ENCODE measurements at regions of chr13 and their contacts with region 1.

Region 1: GRCh38 chr13:76473552-76474134 is 412.6 kb downstream of the KCTD12 start:
- DNase-seq: peak; percentile 50
- H3K4me3 Mint-ChIP-seq: no peak overlapping the region
- H3K27ac Mint-ChIP-seq: no peak overlapping the region
- H3K4me1 Mint-ChIP-seq: no peaks in the 10 kb centered on the region
- H3K27me3 Mint-ChIP-seq: peaks cover 6% of the 10 kb centered on the region

Region 2: DNA sequence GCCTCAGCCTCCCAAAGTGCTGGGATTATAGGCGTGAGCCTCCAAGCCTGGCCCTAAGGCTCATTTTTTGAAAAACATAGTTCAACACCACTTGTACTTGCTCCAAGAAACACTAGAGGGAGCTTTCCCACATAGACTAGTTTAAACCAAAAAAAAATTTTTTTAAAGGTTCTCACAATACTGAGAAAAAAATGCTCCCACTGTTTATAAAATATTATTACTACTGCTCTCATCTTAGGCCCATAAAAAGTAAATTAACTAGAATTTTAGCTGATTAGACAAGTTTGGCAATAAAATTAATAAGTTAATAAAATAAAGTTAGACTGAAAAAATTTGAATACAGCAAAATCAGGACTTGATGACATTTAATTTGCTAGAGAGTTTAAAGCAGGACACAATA is 1101.1 kb before region 1 on chr13:
- intact Hi-C with region 1: loop called (anchors 10 kb)
- DNase-seq: no peak
- H3K4me3 Mint-ChIP-seq: no peak overlapping the region
- H3K27ac Mint-ChIP-seq: no peak overlapping the region
- H3K4me1 Mint-ChIP-seq: peaks cover 12% of the 10 kb centered on the region
- H3K27me3 Mint-ChIP-seq: no peaks in the 10 kb centered on the region

Region 3: DNA sequence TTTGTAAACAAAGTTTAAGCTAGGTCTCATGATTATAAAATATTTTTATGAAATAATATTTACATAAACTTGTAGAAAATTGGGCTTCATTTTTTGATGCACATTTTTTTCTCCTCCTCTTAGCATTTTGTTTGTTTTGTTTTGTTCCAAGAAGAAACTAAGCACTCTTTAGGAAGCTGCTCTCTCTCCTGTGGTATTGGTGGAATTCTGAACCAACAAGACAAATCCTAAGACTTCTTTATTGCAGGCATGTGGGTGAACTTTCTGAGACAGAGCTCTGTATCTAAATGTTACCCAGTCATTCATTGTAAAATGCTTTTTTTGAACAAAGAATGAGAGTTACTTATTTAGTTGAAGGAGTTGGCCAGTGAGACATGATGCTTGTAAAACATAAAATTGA is 798.2 kb before region 1 on chr13:
- intact Hi-C with region 1: loop called (anchors 1 kb)
- DNase-seq: no peak
- H3K4me3 Mint-ChIP-seq: no peak overlapping the region
- H3K27ac Mint-ChIP-seq: no peak overlapping the region
- H3K4me1 Mint-ChIP-seq: no peaks in the 10 kb centered on the region
- H3K27me3 Mint-ChIP-seq: no peaks in the 10 kb centered on the region

Region 4: DNA sequence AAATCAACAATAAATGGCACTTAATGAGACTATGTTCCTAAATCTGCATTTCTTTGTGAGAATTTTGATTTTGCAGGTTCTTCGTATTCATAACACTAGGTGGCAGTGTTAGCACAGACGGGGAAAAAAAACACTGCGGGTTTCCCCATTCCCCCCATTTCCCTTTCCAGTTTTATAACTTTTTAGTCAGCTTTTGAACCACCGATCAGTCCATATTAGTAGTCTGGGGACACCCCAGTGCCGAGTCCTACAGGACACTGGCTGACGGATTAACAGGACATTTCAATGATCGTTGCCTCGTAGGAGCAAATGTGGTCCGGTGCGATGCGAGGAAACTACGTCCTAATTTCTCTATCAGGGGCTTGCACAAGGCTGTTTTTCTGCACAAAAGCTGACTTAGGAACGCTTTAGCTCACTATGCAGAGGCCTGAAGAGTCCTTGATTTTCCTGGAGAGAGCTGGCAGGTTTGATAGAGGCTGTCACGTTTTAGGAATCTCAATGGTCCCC is 603.2 kb before region 1 on chr13:
- intact Hi-C with region 1: loop called (anchors 1 kb)
- DNase-seq: no peak
- H3K4me3 Mint-ChIP-seq: peak overlapping the region; percentile 53
- H3K27ac Mint-ChIP-seq: no peak overlapping the region
- H3K4me1 Mint-ChIP-seq: peaks cover 18% of the 10 kb centered on the region
- H3K27me3 Mint-ChIP-seq: peaks cover 3% of the 10 kb centered on the region

Region 5: DNA sequence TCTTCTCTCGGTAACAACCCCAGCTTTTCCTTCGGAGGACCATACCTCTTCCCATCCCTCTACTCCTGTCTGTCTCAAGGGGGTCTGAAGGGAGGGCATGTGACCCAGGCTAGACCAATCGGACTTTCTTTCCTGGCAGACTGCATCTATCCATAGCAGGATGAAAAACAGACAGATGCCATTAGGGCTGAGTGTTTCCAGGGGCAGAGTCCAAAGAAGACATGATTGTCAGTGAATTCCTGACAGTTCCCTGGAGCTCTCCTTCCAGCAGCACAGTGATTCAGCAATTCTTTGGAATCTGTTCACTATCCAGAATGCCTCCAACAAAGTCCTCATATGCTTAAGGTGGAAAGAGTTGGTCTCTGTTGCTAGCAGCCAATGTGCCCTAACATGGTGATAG is 222.7 kb after region 1 on chr13:
- intact Hi-C with region 1: no loop called
- DNase-seq: no peak
- H3K4me3 Mint-ChIP-seq: no peak overlapping the region
- H3K27ac Mint-ChIP-seq: no peak overlapping the region
- H3K4me1 Mint-ChIP-seq: no peaks in the 10 kb centered on the region
- H3K27me3 Mint-ChIP-seq: no peaks in the 10 kb centered on the region

Region 6: DNA sequence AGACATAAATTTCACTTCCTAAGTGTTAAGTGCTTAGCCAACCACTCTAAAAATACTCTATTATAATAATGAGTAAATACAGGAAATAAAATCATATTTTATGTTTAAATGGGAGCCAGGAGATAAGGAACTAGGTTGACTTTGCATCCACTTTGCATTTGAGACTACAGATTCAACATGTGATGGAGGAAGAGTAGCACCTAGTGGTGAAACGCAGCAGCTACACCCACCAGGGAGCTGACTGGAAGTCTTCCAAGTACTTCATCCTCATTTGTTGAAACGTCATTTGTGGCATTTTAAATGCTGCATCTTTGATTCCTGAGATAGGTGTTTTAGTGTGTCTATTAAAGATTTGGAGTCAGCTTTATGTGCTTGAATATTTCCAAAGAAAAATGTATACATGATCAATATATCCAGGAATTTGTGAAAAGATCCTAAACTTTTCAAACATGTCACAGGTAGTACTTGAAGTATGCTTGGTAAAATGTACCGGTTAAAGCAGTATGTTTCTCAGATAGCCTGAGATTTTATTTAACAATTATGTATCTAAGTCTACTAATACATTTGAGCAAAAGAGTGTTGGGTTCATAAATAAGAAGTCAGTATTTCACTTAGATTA is 430.0 kb after region 1 on chr13:
- intact Hi-C with region 1: loop called (anchors 1 kb)
- DNase-seq: peak; percentile 50
- H3K4me3 Mint-ChIP-seq: no peak overlapping the region
- H3K27ac Mint-ChIP-seq: no peak overlapping the region
- H3K4me1 Mint-ChIP-seq: no peaks in the 10 kb centered on the region
- H3K27me3 Mint-ChIP-seq: peaks cover 24% of the 10 kb centered on the region

Region 7: DNA sequence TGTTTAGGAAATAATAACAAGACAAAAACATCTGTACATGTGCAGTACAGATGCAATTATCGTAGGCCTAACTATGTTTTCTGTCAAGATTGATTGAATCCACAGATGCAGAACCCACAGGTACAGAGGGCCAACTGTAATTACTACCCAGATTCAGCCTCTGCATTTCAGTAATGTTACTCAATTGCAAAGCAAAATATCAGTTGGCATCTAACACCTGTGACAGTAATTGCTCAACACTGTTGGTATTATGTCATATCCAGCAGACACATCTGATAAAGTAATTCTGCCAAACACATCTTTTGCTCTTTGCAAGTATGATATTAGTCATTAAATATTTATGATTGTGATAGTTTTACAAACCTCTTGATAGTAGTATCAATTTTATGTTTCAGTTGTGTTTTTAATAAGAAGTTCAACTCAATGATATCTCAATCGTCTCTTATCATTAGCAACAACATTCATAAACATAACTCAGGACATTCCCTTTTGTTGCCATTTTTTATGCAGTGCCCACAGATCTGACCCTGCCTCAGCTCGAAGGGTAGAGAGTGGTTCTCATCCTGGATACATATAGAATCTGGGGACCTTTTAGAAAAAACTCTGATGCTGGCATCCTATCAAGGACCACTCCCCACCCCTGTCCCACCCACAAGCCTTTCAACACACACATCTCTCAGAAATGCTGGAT is 748.5 kb after region 1 on chr13:
- intact Hi-C with region 1: no loop called
- DNase-seq: no peak
- H3K4me3 Mint-ChIP-seq: no peak overlapping the region
- H3K27ac Mint-ChIP-seq: no peak overlapping the region
- H3K4me1 Mint-ChIP-seq: peaks cover 5% of the 10 kb centered on the region
- H3K27me3 Mint-ChIP-seq: no peaks in the 10 kb centered on the region

Measured in activated T-helper 1 cell treated with anti-CD3 and anti-CD28 coated beads, Interleukin-12 subunit alpha, Interleukin-12 subunit beta, Interleukin-2, Interleukin-4 antibody, amounts not matched to agents 30 ng/mL and 10 ng/mL and 1 ng/mL, durations not matched to agents 14 hours and 24 hours and 36 hours (primary cell).